ENCODE measurements at regions of chr21 and their contacts with region 1.

Region 1: GRCh38 chr21:32257962-32258785 is 20.7 kb downstream of the MIS18A start:
- DNase-seq: no peak
- H3K4me3 ChIP-seq: no peak overlapping the region
- H3K27ac ChIP-seq: peak overlapping the region in 1 of 4 donors; percentile 57
- H3K4me1 ChIP-seq: peaks cover 19 to 44% (median 39%) of the 10 kb centered on the region in 4 donors
- H3K27me3 ChIP-seq: no peaks in the 10 kb centered on the region
- CTCF ChIP-seq: peak; percentile 70 to 77 (median 73)
- EP300 ChIP-seq: no peak
- POLR2A ChIP-seq: no peak

Region 2: GRCh38 chr21:31731802-31732596 is 526.2 kb before region 1 on chr21 and contains the start of gene SCAF4:
- intact Hi-C with region 1: loop called (anchors 5 kb)
- DNase-seq: peak; percentile 95
- H3K4me3 ChIP-seq: peak within 1 kb of the TSS; percentile 70 to 99 (median 93)
- H3K27ac ChIP-seq: peak within 1 kb of the TSS; percentile 90 to 99 (median 97)
- H3K4me1 ChIP-seq: peaks cover 31 to 55% (median 50%) of the 10 kb centered on the region in 4 donors
- H3K27me3 ChIP-seq: no peaks in the 10 kb centered on the region
- CTCF ChIP-seq: no peak
- EP300 ChIP-seq: no peak
- POLR2A ChIP-seq: peak; percentile 70
- total RNA-seq, gene SCAF4: 12.1 to 18.8 (median 15.2) TPM

Region 3: GRCh38 chr21:31781737-31782136 is 476.4 kb before region 1 on chr21:
- intact Hi-C with region 1: loop called (anchors 5 kb)
- DNase-seq: no peak
- H3K4me3 ChIP-seq: no peak overlapping the region
- H3K27ac ChIP-seq: no peak overlapping the region
- H3K4me1 ChIP-seq: peaks cover 0 to 9% (median 5%) of the 10 kb centered on the region in 4 donors
- H3K27me3 ChIP-seq: no peaks in the 10 kb centered on the region
- CTCF ChIP-seq: no peak
- EP300 ChIP-seq: no peak
- POLR2A ChIP-seq: no peak

Region 4: DNA sequence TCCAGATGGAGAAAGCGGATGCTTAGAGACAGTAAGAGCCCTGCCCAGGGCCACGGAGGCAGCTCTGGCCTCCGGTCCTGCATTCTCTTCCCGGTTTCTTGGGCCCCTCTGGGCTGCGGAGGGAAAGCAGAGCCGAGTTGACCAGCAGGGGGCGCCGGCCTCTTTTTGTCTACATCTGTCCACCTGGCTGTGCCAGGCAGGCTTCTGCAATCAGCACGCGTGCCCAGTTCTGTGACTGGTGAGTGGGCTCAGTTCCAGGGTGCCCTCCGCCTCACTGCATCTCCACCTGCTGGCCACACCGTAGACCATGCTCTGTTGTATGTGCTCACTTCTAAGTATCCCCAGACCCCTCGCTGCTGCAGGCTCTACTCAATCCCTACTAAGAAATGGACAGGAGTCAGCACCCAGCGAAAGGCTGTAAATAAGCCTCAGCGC is 392.1 kb before region 1 on chr21:
- intact Hi-C with region 1: loop called (anchors 2 kb)
- DNase-seq: no peak
- H3K4me3 ChIP-seq: no peak overlapping the region
- H3K27ac ChIP-seq: no peak overlapping the region
- H3K4me1 ChIP-seq: peaks cover 6 to 8% (median 7%) of the 10 kb centered on the region in 4 donors
- H3K27me3 ChIP-seq: peaks cover 0 to 24% (median 0%) of the 10 kb centered on the region in 4 donors
- CTCF ChIP-seq: peak; percentile 76 to 93 (median 91)
- EP300 ChIP-seq: no peak
- POLR2A ChIP-seq: no peak

Measured in esophagus muscularis mucosa (tissue), 4 donors.